ENCODE measurements at regions of chr1 and their contacts with region 1.

Region 1: GRCh38 chr1:102174259-102174863 is 177.6 kb upstream of the OLFM3 start:
- DNase-seq: peak in 1 of 2 experiments; percentile 54
- H3K4me3 ChIP-seq: no peak overlapping the region
- H3K27ac ChIP-seq: no peak overlapping the region
- H3K4me1 ChIP-seq: no peaks in the 10 kb centered on the region
- H3K27me3 ChIP-seq: no peaks in the 10 kb centered on the region
- CTCF ChIP-seq: peak; percentile 33 to 84 (median 64)
- EP300 ChIP-seq: no peak
- POLR2A ChIP-seq: no peak
- RAD21 ChIP-seq: peak; percentile 67 to 68

Region 2: DNA sequence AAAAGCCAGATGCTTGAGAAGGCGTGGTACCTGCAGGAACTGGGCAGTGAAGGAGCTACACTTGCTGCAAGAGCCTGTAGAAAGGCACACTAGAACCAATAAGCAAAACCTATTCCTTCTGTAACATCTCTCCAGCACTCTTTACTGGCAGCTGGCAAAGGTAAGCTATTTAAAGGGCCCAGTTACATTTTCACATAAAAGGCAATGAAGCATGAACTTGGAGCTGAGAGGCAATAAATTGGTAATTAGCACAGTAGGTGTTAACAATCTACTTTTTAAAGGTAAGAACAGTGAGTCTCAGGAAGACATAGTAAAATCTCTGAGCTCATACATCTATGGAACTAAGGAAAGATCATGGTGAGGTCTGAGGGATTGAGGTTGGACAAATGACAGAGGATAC is 10.6 kb before region 1 on chr1:
- CTCF ChIA-PET with region 1: interaction called, 16 read pairs
- POLR2A ChIA-PET with region 1: no interaction called
- DNase-seq: no peak
- H3K4me3 ChIP-seq: no peak overlapping the region
- H3K27ac ChIP-seq: no peak overlapping the region
- H3K4me1 ChIP-seq: no peaks in the 10 kb centered on the region
- H3K27me3 ChIP-seq: no peaks in the 10 kb centered on the region
- CTCF ChIP-seq: no peak
- EP300 ChIP-seq: no peak
- POLR2A ChIP-seq: no peak
- RAD21 ChIP-seq: no peak